ENCODE measurements at regions of chr6 and their contacts with region 1.

Region 1: GRCh38 chr6:16409531-16410441 is 171.4 kb downstream of the GMPR start:
- DNase-seq: peak; percentile 59 to 77
- H3K4me3 ChIP-seq: no peak overlapping the region
- H3K27ac ChIP-seq: peak overlapping the region in 1 of 2 donors; percentile 11
- H3K4me1 ChIP-seq: peaks cover 0 to 62% (median 31%) of the 10 kb centered on the region in 4 donors
- H3K27me3 ChIP-seq: no peaks in the 10 kb centered on the region
- CTCF ChIP-seq: peak; percentile 78 to 87

Region 2: DNA sequence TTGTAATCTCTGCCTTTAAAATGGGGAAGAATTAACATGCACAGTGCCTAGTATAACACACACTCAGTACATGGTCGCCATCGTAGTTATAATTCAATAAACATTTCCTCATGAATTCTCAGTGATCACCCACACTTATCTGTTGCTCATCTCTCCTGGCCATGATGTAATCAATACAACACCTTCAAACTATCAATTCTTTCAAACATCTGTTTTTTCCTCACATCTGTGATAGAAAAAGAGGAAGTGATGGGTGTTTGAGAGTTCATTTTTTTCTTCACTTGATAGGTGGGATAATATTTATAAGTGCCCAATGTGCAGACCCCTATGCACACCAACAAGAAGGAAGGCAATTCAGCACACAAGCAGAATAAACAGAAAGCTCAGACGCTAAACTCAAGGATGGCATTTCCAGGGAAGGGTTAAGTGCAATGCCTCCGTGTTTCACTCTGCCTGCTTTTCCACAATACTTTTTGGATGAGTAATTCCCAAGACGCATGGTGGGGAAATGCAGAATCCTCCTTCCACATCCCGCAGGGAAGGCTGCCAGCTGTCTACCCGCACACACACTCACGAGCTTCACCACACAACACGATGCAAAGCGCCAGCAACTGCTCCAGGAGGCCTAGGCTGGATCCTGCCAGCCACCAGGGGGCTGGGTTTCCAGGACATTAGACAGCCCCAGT is 71.1 kb before region 1 on chr6:
- intact Hi-C with region 1: loop called (anchors 5 kb)
- DNase-seq: peak; percentile 85 to 89
- H3K4me3 ChIP-seq: no peak overlapping the region
- H3K27ac ChIP-seq: peak overlapping the region in 1 of 2 donors; percentile 37
- H3K4me1 ChIP-seq: peaks cover 0 to 62% (median 45%) of the 10 kb centered on the region in 4 donors
- H3K27me3 ChIP-seq: no peaks in the 10 kb centered on the region
- CTCF ChIP-seq: peak; percentile 35 to 41

Region 3: DNA sequence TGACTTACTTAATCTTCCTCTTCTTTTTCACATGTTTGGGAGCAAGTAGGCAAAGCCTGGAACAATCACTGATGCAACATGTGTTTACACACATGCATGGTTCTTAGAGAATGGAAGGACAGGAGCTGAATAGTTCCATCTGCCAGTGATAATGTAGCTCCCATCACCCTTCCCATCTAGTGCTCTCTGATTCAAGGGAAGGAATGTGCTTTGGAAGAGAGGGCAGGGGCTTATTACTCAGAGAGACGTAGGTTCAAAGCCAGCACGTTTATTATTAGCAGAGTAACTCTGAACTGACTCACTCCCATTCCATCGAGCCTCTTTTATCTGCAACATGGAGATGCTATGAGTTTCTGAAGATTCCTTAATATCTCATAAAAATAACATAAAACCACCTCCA is 40.5 kb after region 1 on chr6:
- intact Hi-C with region 1: no loop called
- DNase-seq: no peak
- H3K4me3 ChIP-seq: no peak overlapping the region
- H3K27ac ChIP-seq: no peak overlapping the region
- H3K4me1 ChIP-seq: peaks cover 0 to 22% (median 5%) of the 10 kb centered on the region in 4 donors
- H3K27me3 ChIP-seq: no peaks in the 10 kb centered on the region
- CTCF ChIP-seq: no peak

Region 4: GRCh38 chr6:16461491-16461890 is 51.7 kb after region 1 on chr6:
- intact Hi-C with region 1: no loop called
- DNase-seq: no peak
- H3K4me3 ChIP-seq: no peak overlapping the region
- H3K27ac ChIP-seq: no peak overlapping the region
- H3K4me1 ChIP-seq: peaks cover 0 to 6% (median 0%) of the 10 kb centered on the region in 4 donors
- H3K27me3 ChIP-seq: no peaks in the 10 kb centered on the region
- CTCF ChIP-seq: no peak

Measured in tibial artery (tissue), 4 donors.